CD14-positive monocyte (primary cell): ENCODE measurements at regions of chr1 and their contacts with region 1.

Region 1: GRCh38 chr1:154391086-154391770 is 13.9 kb upstream of the IL6R start:
- DNase-seq: peak in 1 of 3 donors; percentile 33
- H3K4me3 ChIP-seq: no peak overlapping the region
- H3K4me3 Mint-ChIP-seq: no peak overlapping the region
- H3K27ac ChIP-seq: no peak overlapping the region
- H3K27ac Mint-ChIP-seq: peak overlapping the region in 3 of 7 donors; percentile 1 to 48 (median 13)
- H3K4me1 ChIP-seq: peaks cover 8 to 16% of the 10 kb centered on the region in 2 donors
- H3K4me1 Mint-ChIP-seq: peaks cover 17% of the 10 kb centered on the region
- H3K27me3 ChIP-seq: no peaks in the 10 kb centered on the region
- H3K27me3 Mint-ChIP-seq: peaks cover 0 to 2% (median 0%) of the 10 kb centered on the region in 3 donors
- CTCF ChIP-seq: no peak

Region 2: GRCh38 chr1:154186177-154186576 is 205.1 kb before region 1 on chr1:
- intact Hi-C with region 1: no loop called
- DNase-seq: peak; percentile 44 to 57 (median 55)
- H3K4me3 ChIP-seq: no peak overlapping the region
- H3K4me3 Mint-ChIP-seq: no peak overlapping the region
- H3K27ac ChIP-seq: no peak overlapping the region
- H3K27ac Mint-ChIP-seq: no peak overlapping the region
- H3K4me1 ChIP-seq: peaks cover 15 to 25% of the 10 kb centered on the region in 2 donors
- H3K4me1 Mint-ChIP-seq: peaks cover 21% of the 10 kb centered on the region
- H3K27me3 ChIP-seq: no peaks in the 10 kb centered on the region
- H3K27me3 Mint-ChIP-seq: peaks cover 0 to 4% (median 0%) of the 10 kb centered on the region in 3 donors
- CTCF ChIP-seq: peak; percentile 84

Region 3: DNA sequence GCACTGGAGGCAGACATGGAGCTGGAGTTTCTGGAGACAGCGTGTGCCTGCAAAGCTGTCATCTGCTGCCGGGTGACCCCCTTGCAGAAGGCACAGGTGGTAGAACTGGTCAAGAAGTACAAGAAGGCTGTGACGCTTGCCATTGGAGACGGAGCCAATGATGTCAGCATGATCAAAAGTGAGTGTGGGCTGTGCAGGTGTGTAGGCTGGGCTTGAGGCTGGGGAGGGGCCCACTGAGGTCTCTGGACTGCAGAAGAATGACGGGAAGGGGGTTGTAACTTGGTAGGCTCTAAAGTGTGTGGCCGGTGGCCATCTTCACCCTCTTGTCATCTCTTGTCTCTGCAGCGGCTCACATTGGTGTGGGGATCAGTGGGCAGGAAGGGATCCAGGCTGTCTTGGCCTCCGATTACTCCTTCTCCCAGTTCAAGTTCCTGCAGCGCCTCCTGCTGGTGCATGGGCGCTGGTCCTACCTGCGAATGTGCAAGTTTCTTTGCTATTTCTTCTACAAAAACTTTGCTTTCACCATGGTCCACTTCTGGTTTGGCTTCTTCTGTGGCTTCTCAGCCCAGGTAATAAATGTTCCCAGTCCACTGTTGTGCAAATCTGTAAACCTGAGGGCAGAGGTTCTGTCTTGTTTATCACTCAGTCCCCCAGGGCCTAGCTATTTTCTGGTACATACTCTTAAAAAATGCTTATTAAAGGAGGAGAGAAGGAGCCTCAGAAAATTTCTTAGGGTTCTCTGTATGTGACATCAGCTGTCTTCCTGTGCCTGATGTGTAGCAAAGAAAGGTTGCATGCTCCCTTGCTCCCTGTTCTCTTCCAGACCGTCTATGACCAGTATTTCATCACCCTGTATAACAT is 46.0 kb before region 1 on chr1:
- intact Hi-C with region 1: loop called in 1 of 2 experiments (anchors 10 kb)
- DNase-seq: peak in 1 of 3 donors; percentile 25
- H3K4me3 ChIP-seq: no peak overlapping the region
- H3K4me3 Mint-ChIP-seq: no peak overlapping the region
- H3K27ac ChIP-seq: peak overlapping the region in 1 of 2 donors; percentile 1
- H3K27ac Mint-ChIP-seq: peak overlapping the region in 6 of 7 donors; percentile 8 to 77 (median 36)
- H3K4me1 ChIP-seq: peaks cover 40 to 50% of the 10 kb centered on the region in 2 donors
- H3K4me1 Mint-ChIP-seq: peaks cover 50% of the 10 kb centered on the region
- H3K27me3 ChIP-seq: no peaks in the 10 kb centered on the region
- H3K27me3 Mint-ChIP-seq: peaks cover 0 to 2% (median 2%) of the 10 kb centered on the region in 3 donors
- CTCF ChIP-seq: peak; percentile 57